ENCODE measurements at regions of chr22 and their contacts with region 1.

Region 1: DNA sequence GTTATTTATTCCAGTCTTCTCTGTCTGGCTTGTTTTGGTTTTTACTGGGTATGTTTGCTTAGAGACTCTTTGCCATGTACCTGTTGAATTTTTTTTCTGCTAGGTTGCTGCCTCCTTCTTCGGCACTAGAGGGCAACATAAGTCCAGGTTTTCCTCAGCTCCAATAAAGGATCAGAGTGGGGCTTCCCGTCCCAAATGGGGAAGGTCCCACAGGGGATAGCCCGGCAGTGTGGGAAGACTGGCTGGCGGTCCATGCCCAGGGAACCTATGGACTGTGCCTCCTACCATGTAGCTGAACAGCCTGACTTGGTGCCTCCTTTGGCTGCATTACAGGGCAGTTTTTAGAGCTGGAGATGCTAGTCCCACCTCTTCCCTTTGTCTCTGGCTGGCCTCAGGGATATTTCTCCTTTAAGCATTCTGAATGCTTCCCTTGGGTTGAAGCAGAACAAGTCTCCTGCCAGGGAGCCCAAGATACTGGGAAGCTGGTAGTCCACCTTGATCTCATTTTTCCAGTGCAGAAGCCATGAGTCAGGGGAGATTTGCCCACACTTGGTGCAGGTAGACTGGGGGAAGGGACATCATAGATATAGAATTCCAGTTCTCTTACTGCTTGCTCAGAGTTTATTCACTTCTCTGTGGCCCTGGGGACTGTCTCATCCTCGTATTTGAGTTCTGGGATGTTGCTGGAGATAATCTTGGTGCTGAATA is 60.2 kb downstream of the BRD1 start:
- DNase-seq: peak; percentile 48 to 58 (median 54)
- H3K4me3 ChIP-seq: no peak overlapping the region
- H3K4me3 Mint-ChIP-seq: peak overlapping the region in 1 of 8 donors; percentile 12
- H3K27ac ChIP-seq: no peak overlapping the region
- H3K27ac Mint-ChIP-seq: peak overlapping the region; percentile 6 to 88 (median 45)
- H3K4me1 ChIP-seq: no peaks in the 10 kb centered on the region
- H3K4me1 Mint-ChIP-seq: peaks cover 0 to 7% (median 2%) of the 10 kb centered on the region in 4 donors
- H3K27me3 ChIP-seq: no peaks in the 10 kb centered on the region
- H3K27me3 Mint-ChIP-seq: no peaks in the 10 kb centered on the region

Region 2: GRCh38 chr22:49712195-49712791 is 55.2 kb before region 1 on chr22:
- CTCF ChIA-PET with region 1: no interaction called
- POLR2A ChIA-PET with region 1: no interaction called
- intact Hi-C with region 1: no loop called
- DNase-seq: no peak
- H3K4me3 ChIP-seq: no peak overlapping the region
- H3K4me3 Mint-ChIP-seq: no peak overlapping the region
- H3K27ac ChIP-seq: no peak overlapping the region
- H3K27ac Mint-ChIP-seq: no peak overlapping the region
- H3K4me1 ChIP-seq: no peaks in the 10 kb centered on the region
- H3K4me1 Mint-ChIP-seq: no peaks in the 10 kb centered on the region
- H3K27me3 ChIP-seq: no peaks in the 10 kb centered on the region
- H3K27me3 Mint-ChIP-seq: peaks cover 27 to 32% of the 10 kb centered on the region in 2 donors

Region 3: GRCh38 chr22:49880281-49880680 is 112.8 kb after region 1 on chr22:
- CTCF ChIA-PET with region 1: interaction called, 4 read pairs
- POLR2A ChIA-PET with region 1: no interaction called
- intact Hi-C with region 1: loop called (anchors 10 kb)
- DNase-seq: no peak
- H3K4me3 ChIP-seq: no peak overlapping the region
- H3K4me3 Mint-ChIP-seq: peak overlapping the region in 3 of 8 donors; percentile 7 to 67 (median 13)
- H3K27ac ChIP-seq: no peak overlapping the region
- H3K27ac Mint-ChIP-seq: peak overlapping the region; percentile 6 to 71 (median 63)
- H3K4me1 ChIP-seq: peaks cover 23% of the 10 kb centered on the region
- H3K4me1 Mint-ChIP-seq: peaks cover 30 to 58% (median 38%) of the 10 kb centered on the region in 4 donors
- H3K27me3 ChIP-seq: no peaks in the 10 kb centered on the region
- H3K27me3 Mint-ChIP-seq: no peaks in the 10 kb centered on the region

Region 4: GRCh38 chr22:49930739-49931412 is 163.4 kb after region 1 on chr22:
- CTCF ChIA-PET with region 1: interaction called, 16 read pairs
- POLR2A ChIA-PET with region 1: interaction called, 7 read pairs
- intact Hi-C with region 1: no loop called
- DNase-seq: peak in 3 of 5 donors; percentile 30 to 45 (median 40)
- H3K4me3 ChIP-seq: no peak overlapping the region
- H3K4me3 Mint-ChIP-seq: peak overlapping the region; percentile 4 to 80 (median 55)
- H3K27ac ChIP-seq: no peak overlapping the region
- H3K27ac Mint-ChIP-seq: peak overlapping the region; percentile 54 to 93 (median 88)
- H3K4me1 ChIP-seq: peaks cover 51% of the 10 kb centered on the region
- H3K4me1 Mint-ChIP-seq: peaks cover 20 to 49% (median 31%) of the 10 kb centered on the region in 4 donors
- H3K27me3 ChIP-seq: no peaks in the 10 kb centered on the region
- H3K27me3 Mint-ChIP-seq: no peaks in the 10 kb centered on the region

Region 5: DNA sequence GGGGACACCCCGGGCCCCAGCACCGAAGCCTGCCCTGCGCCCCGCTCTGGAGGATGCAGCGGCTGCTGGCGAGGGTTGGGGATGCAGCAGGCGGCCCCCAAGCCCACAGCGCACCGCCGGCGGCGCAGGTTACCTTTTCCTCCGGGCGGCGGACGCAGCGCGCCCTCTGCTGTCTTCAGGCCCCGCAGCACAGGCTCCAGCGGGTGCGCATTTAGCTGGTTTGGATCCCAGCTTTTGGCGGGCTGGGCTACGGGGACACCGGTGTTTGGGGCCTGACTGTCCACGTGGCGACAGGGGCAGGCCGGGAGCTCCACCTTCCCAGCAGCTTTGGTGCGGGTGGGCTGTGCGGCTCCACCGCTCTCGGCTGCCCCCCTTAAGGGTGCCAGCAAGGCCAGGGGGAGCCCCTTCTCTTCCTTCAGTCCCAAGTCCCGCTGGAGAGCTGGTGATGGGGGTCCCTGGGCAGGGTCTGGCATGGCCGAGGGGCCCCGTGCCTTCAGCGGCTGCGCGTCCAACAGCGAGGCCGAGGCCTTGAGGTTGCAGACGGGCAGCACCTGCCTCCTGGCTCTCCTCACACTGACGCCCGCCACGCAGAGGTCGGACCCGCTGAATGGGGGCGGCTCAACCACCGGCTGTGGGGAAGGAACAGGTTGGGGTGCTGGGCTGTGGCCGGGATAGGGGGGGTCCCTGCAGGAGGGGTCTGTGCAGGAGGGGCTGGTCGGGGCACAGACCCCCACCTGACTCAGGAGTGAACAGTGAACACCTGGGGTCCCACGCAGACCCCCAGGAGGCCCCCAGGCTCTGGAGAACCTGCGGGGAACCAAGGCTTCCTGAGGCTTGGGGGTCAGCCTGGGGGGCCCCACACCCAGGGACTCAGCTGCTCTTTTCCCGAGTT is 263.0 kb after region 1 on chr22:
- CTCF ChIA-PET with region 1: interaction called, 58 read pairs
- POLR2A ChIA-PET with region 1: interaction called, 10 read pairs
- intact Hi-C with region 1: loop called (anchors 1 kb)
- DNase-seq: peak; percentile 81 to 87 (median 84)
- H3K4me3 ChIP-seq: no peak overlapping the region
- H3K4me3 Mint-ChIP-seq: no peak overlapping the region
- H3K27ac ChIP-seq: no peak overlapping the region
- H3K27ac Mint-ChIP-seq: no peak overlapping the region
- H3K4me1 ChIP-seq: peaks cover 18% of the 10 kb centered on the region
- H3K4me1 Mint-ChIP-seq: peaks cover 3 to 15% (median 8%) of the 10 kb centered on the region in 4 donors
- H3K27me3 ChIP-seq: no peaks in the 10 kb centered on the region
- H3K27me3 Mint-ChIP-seq: peaks cover 0 to 8% of the 10 kb centered on the region in 2 donors

Region 6: GRCh38 chr22:50209893-50210292 is 442.4 kb after region 1 on chr22:
- CTCF ChIA-PET with region 1: no interaction called
- POLR2A ChIA-PET with region 1: no interaction called
- intact Hi-C with region 1: loop called (anchors 2 kb)
- DNase-seq: peak; percentile 66 to 75 (median 71)
- H3K4me3 ChIP-seq: no peak overlapping the region
- H3K4me3 Mint-ChIP-seq: peak overlapping the region in 1 of 8 donors; percentile 33
- H3K27ac ChIP-seq: no peak overlapping the region
- H3K27ac Mint-ChIP-seq: peak overlapping the region; percentile 61 to 94 (median 80)
- H3K4me1 ChIP-seq: peaks cover 8% of the 10 kb centered on the region
- H3K4me1 Mint-ChIP-seq: peaks cover 15 to 40% (median 20%) of the 10 kb centered on the region in 4 donors
- H3K27me3 ChIP-seq: no peaks in the 10 kb centered on the region
- H3K27me3 Mint-ChIP-seq: no peaks in the 10 kb centered on the region

Measured in CD4-positive, alpha-beta memory T cell (primary cell).